ENCODE measurements at regions of chr2 and their contacts with region 1.

Region 1: GRCh38 chr2:226649871-226650660 is 149.6 kb downstream of the IRS1 start:
- DNase-seq: peak; percentile 74
- H3K4me3 Mint-ChIP-seq: no peak overlapping the region
- H3K27ac Mint-ChIP-seq: peak overlapping the region; percentile 50
- H3K4me1 Mint-ChIP-seq: peaks cover 25% of the 10 kb centered on the region
- H3K27me3 Mint-ChIP-seq: peaks cover 3% of the 10 kb centered on the region

Region 2: GRCh38 chr2:226489775-226490541 is 160.1 kb before region 1 on chr2:
- CTCF ChIA-PET with region 1: no interaction called
- intact Hi-C with region 1: loop called (anchors 5 kb)
- DNase-seq: peak; percentile 6
- H3K4me3 Mint-ChIP-seq: no peak overlapping the region
- H3K27ac Mint-ChIP-seq: no peak overlapping the region
- H3K4me1 Mint-ChIP-seq: peaks cover 5% of the 10 kb centered on the region
- H3K27me3 Mint-ChIP-seq: peaks cover 11% of the 10 kb centered on the region

Region 3: GRCh38 chr2:226631671-226632070 is 18.4 kb before region 1 on chr2:
- CTCF ChIA-PET with region 1: no interaction called
- intact Hi-C with region 1: no loop called
- DNase-seq: no peak
- H3K4me3 Mint-ChIP-seq: no peak overlapping the region
- H3K27ac Mint-ChIP-seq: no peak overlapping the region
- H3K4me1 Mint-ChIP-seq: no peaks in the 10 kb centered on the region
- H3K27me3 Mint-ChIP-seq: peaks cover 15% of the 10 kb centered on the region

Region 4: DNA sequence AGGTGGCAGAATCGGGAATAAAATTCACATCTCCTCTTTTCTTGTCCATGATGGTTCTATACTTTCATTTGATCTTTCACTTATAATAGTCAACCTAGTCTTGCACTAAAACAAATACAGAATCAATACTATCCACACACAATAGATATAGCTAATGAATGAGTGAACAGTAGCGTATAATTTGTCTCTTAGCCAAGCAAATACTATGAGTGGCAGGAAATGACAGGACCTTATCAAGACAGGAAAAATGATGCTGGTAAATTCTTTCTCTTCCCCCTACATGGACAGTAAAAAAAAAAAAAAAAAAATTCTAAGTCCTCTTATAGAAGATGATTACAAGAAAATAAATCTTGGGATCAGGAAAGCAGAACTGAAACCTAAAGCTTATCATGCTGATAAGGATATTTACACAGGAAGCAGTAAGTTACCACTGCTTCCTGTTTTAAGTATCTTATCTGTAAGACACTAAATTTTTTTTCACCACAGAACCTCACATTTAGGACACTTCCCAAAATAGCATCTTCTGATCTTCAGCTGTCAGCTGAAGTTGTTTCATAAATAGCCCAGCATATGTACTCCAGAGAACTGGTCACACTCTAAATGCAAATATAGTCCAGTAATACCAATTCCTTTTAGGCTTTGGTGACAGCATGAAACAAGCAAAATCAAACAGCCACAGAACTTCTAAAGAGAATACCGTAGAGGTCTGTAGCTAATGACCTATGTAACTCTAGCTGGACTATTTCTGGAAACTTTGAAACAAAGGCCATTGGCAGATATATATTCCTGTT is 122.5 kb after region 1 on chr2:
- CTCF ChIA-PET with region 1: no interaction called
- intact Hi-C with region 1: loop called (anchors 5 kb)
- DNase-seq: no peak
- H3K4me3 Mint-ChIP-seq: peak overlapping the region; percentile 10
- H3K27ac Mint-ChIP-seq: no peak overlapping the region
- H3K4me1 Mint-ChIP-seq: peaks cover 21% of the 10 kb centered on the region
- H3K27me3 Mint-ChIP-seq: no peaks in the 10 kb centered on the region

Region 5: DNA sequence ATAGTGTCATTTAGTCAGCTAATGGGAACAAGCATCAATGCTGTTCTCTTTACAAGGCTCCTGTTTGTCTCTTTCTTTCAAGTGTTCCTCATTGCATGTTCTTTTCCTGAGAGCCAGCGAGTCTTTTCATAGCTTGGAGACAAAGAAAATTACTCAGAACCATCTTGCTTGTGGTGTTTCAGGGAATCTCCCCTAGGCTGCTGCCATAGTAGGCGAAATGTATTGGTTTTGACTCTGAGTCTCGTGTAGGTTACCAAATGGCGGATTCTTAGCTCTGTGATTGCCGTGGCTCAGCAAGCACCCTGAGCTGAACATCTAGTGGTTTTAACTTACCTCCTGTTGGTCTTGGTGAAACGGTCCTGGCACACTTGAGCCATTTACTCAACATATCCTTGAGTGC is 254.5 kb after region 1 on chr2:
- CTCF ChIA-PET with region 1: no interaction called
- intact Hi-C with region 1: loop called (anchors 5 kb)
- DNase-seq: peak; percentile 54
- H3K4me3 Mint-ChIP-seq: no peak overlapping the region
- H3K27ac Mint-ChIP-seq: no peak overlapping the region
- H3K4me1 Mint-ChIP-seq: peaks cover 47% of the 10 kb centered on the region
- H3K27me3 Mint-ChIP-seq: no peaks in the 10 kb centered on the region

Region 6: GRCh38 chr2:227566012-227566411 is 915.9 kb after region 1 on chr2:
- CTCF ChIA-PET with region 1: no interaction called
- intact Hi-C with region 1: loop called (anchors 10 kb)
- DNase-seq: no peak
- H3K4me3 Mint-ChIP-seq: no peak overlapping the region
- H3K27ac Mint-ChIP-seq: no peak overlapping the region
- H3K4me1 Mint-ChIP-seq: peaks cover 6% of the 10 kb centered on the region
- H3K27me3 Mint-ChIP-seq: no peaks in the 10 kb centered on the region

Measured in activated naive CD4-positive, alpha-beta T cell treated with anti-CD3 and anti-CD28 coated beads for 36 hours (primary cell).